ENCODE measurements at regions of chr3 and their contacts with region 1.

Region 1: GRCh38 chr3:128075516-128076482 is 23.6 kb downstream of the SEC61A1 start:
- DNase-seq: peak; percentile 73 to 93 (median 84)
- ATAC-seq: peak; percentile 95
- H3K4me3 ChIP-seq: peak overlapping the region; percentile 53
- H3K4me3 Mint-ChIP-seq: peak overlapping the region; percentile 55 to 82 (median 73)
- H3K27ac ChIP-seq: peak overlapping the region; percentile 42
- H3K27ac Mint-ChIP-seq: peak overlapping the region in 6 of 9 donors; percentile 51 to 84 (median 62)
- H3K4me1 ChIP-seq: peaks cover 0 to 9% of the 10 kb centered on the region in 2 donors
- H3K4me1 Mint-ChIP-seq: peaks cover 0 to 12% (median 7%) of the 10 kb centered on the region in 7 donors
- H3K27me3 ChIP-seq: no peaks in the 10 kb centered on the region
- H3K27me3 Mint-ChIP-seq: peaks cover 0 to 2% (median 0%) of the 10 kb centered on the region in 5 donors

Region 2: DNA sequence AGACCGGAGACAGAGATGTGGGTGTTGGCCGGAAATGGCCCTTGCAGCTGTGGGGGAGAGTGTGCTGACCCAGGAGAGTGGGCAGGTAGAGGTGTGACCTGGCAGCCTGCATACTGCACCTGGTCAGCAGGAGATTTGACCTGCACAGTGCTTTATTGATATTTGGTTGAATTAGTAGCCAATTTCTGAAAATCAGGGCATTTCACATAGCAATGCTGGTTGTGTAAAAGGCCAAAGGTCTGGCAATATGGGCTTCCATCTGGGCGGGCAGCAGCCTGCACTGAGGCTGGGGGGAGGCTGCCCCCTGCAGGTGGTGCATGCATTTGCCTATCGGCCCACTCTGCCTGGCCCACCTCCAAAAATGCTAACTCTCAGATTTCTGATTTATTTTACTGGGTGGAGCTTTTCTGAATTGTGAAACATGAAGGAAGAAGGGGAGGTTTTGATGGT is 244.1 kb before region 1 on chr3:
- CTCF ChIA-PET with region 1: no interaction called
- POLR2A ChIA-PET with region 1: no interaction called
- intact Hi-C with region 1: no loop called
- DNase-seq: no peak
- ATAC-seq: peak; percentile 68
- H3K4me3 ChIP-seq: no peak overlapping the region
- H3K4me3 Mint-ChIP-seq: no peak overlapping the region
- H3K27ac ChIP-seq: no peak overlapping the region
- H3K27ac Mint-ChIP-seq: no peak overlapping the region
- H3K4me1 ChIP-seq: no peaks in the 10 kb centered on the region
- H3K4me1 Mint-ChIP-seq: peaks cover 0 to 4% (median 0%) of the 10 kb centered on the region in 7 donors
- H3K27me3 ChIP-seq: no peaks in the 10 kb centered on the region
- H3K27me3 Mint-ChIP-seq: peaks cover 11 to 55% (median 25%) of the 10 kb centered on the region in 5 donors

Region 3: DNA sequence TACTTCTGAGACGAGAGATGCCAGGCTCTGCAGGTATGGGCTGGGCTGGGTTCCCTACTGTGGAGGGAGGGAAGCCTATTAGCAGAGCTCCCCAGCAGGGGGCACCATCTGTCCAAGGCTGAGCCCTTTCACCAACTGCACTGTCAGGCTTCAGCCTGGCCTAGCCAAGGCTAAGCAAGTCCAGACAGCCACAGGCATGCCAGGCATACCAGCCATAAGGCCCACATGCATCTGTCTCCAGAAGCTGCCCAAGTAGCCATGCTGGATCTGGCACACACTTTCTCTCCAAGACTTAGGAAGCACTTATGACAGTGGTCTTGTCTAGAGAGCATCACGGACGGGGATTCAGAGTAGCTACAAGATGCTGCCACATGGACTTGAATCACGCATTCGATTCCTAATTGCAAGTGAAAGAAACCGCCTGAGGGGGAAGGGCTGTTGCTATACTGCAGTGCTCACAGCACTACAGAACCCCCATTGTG is 19.5 kb after region 1 on chr3:
- CTCF ChIA-PET with region 1: interaction called, 3 read pairs
- POLR2A ChIA-PET with region 1: interaction called, 4 read pairs
- intact Hi-C with region 1: loop called in 1 of 2 experiments (anchors 2 kb)
- DNase-seq: peak; percentile 51 to 79 (median 73)
- ATAC-seq: peak; percentile 99
- H3K4me3 ChIP-seq: no peak overlapping the region
- H3K4me3 Mint-ChIP-seq: no peak overlapping the region
- H3K27ac ChIP-seq: no peak overlapping the region
- H3K27ac Mint-ChIP-seq: peak overlapping the region in 4 of 9 donors; percentile 16 to 68 (median 36)
- H3K4me1 ChIP-seq: no peaks in the 10 kb centered on the region
- H3K4me1 Mint-ChIP-seq: peaks cover 1 to 18% (median 6%) of the 10 kb centered on the region in 7 donors
- H3K27me3 ChIP-seq: no peaks in the 10 kb centered on the region
- H3K27me3 Mint-ChIP-seq: no peaks in the 10 kb centered on the region

Region 4: GRCh38 chr3:128123538-128124368 is 48.0 kb after region 1 on chr3 and contains the start of gene RUVBL1:
- CTCF ChIA-PET with region 1: interaction called, 3 read pairs
- POLR2A ChIA-PET with region 1: no interaction called
- intact Hi-C with region 1: loop called (anchors 1 to 2 kb)
- DNase-seq: peak; percentile 85 to 99 (median 98)
- ATAC-seq: peak; percentile 97
- H3K4me3 ChIP-seq: peak within 1 kb of the TSS; percentile 83
- H3K4me3 Mint-ChIP-seq: peak within 1 kb of the TSS; percentile 82 to 100 (median 98)
- H3K27ac ChIP-seq: peak within 1 kb of the TSS; percentile 84
- H3K27ac Mint-ChIP-seq: peak within 1 kb of the TSS; percentile 95 to 99 (median 97)
- H3K4me1 ChIP-seq: peaks cover 13 to 15% of the 10 kb centered on the region in 2 donors
- H3K4me1 Mint-ChIP-seq: peaks cover 23 to 40% (median 27%) of the 10 kb centered on the region in 7 donors
- H3K27me3 ChIP-seq: no peaks in the 10 kb centered on the region
- H3K27me3 Mint-ChIP-seq: peaks cover 0 to under 1% (median 0%) of the 10 kb centered on the region in 5 donors
- total RNA-seq, gene RUVBL1: 16.8 to 59.3 (median 22.5) TPM

Region 5: GRCh38 chr3:128133273-128134084 is 57.7 kb after region 1 on chr3:
- CTCF ChIA-PET with region 1: interaction called, 5 read pairs
- POLR2A ChIA-PET with region 1: no interaction called
- intact Hi-C with region 1: loop called in 1 of 2 experiments (anchors 1 kb)
- DNase-seq: peak in 5 of 9 donors; percentile 14 to 34 (median 23)
- ATAC-seq: peak; percentile 76
- H3K4me3 ChIP-seq: no peak overlapping the region
- H3K4me3 Mint-ChIP-seq: no peak overlapping the region
- H3K27ac ChIP-seq: no peak overlapping the region
- H3K27ac Mint-ChIP-seq: no peak overlapping the region
- H3K4me1 ChIP-seq: no peaks in the 10 kb centered on the region
- H3K4me1 Mint-ChIP-seq: no peaks in the 10 kb centered on the region
- H3K27me3 ChIP-seq: no peaks in the 10 kb centered on the region
- H3K27me3 Mint-ChIP-seq: peaks cover 0 to 34% (median 3%) of the 10 kb centered on the region in 5 donors

Region 6: DNA sequence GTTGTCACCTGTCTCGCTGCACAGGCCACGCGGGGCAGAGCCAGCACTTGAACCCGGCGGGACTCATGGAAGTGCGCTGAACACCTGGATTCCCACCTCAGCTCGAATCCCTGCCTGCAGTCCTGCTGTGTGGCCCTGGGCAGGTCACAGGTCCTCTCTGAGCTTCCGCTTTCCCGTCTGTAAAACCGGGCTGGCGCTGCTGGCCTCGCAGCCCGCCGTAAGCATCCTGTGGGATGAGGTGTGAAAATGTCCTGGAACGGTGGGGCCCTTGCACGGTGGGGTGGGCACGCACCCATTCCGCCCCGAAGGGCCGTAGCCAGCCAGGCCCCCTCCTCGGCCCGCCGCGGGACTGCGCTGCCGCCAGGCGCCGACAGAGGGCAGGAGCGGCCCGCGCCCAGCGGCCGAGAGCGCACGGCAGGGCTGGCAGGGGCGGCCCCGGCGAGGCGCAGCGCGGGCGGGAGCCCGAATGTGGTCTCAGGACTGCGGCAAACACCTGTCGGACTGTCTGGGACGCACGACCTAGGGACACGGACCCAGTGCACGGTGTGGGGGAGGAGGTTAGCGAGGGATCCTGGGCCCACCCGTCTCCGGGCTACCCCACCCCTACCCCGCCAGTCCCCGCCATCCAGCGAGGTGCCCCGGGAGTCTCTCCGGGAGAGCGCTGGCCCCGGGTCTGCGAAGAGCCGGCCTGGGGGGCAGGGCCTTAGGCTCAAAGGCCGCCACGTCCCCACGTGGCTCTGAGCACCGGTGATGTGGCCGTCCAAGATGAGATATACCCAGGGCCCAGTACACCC is 350.5 kb after region 1 on chr3:
- CTCF ChIA-PET with region 1: no interaction called
- POLR2A ChIA-PET with region 1: no interaction called
- intact Hi-C with region 1: loop called in 1 of 2 experiments (anchors 1 kb)
- DNase-seq: peak; percentile 23 to 81 (median 61)
- ATAC-seq: peak; percentile 93
- H3K4me3 ChIP-seq: no peak overlapping the region
- H3K4me3 Mint-ChIP-seq: peak overlapping the region in 1 of 10 donors; percentile 19
- H3K27ac ChIP-seq: no peak overlapping the region
- H3K27ac Mint-ChIP-seq: no peak overlapping the region
- H3K4me1 ChIP-seq: no peaks in the 10 kb centered on the region
- H3K4me1 Mint-ChIP-seq: peaks cover 0 to 4% (median 0%) of the 10 kb centered on the region in 7 donors
- H3K27me3 ChIP-seq: no peaks in the 10 kb centered on the region
- H3K27me3 Mint-ChIP-seq: peaks cover 9 to 35% (median 22%) of the 10 kb centered on the region in 5 donors

Region 7: DNA sequence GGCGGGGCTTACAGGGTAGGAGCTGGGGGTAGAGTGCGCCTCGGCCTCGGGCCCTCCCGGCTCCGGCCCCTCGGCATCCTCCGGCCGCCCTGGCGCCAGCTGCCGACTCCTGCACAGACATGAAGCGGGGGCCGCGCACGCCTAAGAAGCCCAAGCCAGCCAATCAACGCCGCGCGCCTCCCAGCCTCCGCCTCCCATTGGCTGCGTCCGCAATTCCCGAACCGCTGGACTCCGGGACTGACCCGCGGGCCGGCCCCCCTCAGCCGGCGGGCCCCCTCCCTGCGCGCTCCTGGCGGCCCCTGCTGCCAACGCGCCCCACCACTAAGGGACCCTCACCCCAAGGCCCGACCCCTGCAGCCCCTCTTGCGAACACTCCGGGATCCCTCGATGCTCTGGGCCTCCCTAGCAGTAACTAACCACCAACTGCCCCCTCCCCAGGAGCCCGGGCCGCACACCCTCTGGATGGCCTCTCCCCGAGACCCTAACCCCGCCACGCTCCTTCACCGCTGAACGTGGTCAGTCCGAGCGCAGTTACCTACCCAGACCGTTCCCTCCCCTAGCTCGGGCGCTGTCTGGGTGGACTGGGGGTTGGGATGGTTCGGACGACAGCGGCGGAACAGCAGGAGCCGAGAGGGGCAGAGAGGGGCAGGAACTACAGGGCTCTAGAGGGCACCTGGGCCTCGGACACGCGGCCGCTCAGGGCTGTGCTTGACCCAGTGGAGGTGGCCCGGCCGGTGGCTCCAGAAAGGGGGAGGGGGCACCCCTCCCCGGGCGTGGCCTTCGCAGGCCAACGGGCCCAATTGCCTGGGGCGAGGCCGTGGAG is 412.2 kb after region 1 on chr3:
- CTCF ChIA-PET with region 1: no interaction called
- POLR2A ChIA-PET with region 1: no interaction called
- intact Hi-C with region 1: loop called in 1 of 2 experiments (anchors 5 kb)
- DNase-seq: peak in 2 of 9 donors; percentile 28 to 36
- ATAC-seq: peak; percentile 30
- H3K4me3 ChIP-seq: peak overlapping the region; percentile 59
- H3K4me3 Mint-ChIP-seq: peak overlapping the region in 9 of 10 donors; percentile 25 to 97 (median 89)
- H3K27ac ChIP-seq: no peak overlapping the region
- H3K27ac Mint-ChIP-seq: no peak overlapping the region
- H3K4me1 ChIP-seq: peaks cover 11 to 61% of the 10 kb centered on the region in 2 donors
- H3K4me1 Mint-ChIP-seq: peaks cover 21 to 52% (median 31%) of the 10 kb centered on the region in 7 donors
- H3K27me3 ChIP-seq: peaks cover 14 to 52% of the 10 kb centered on the region in 2 donors
- H3K27me3 Mint-ChIP-seq: peaks cover 58 to 80% (median 62%) of the 10 kb centered on the region in 5 donors

Region 8: GRCh38 chr3:128497387-128498126 is 421.8 kb after region 1 on chr3:
- CTCF ChIA-PET with region 1: no interaction called
- POLR2A ChIA-PET with region 1: no interaction called
- intact Hi-C with region 1: loop called (anchors 1 to 5 kb)
- DNase-seq: peak; percentile 55 to 86 (median 72)
- ATAC-seq: peak; percentile 75
- H3K4me3 ChIP-seq: peak overlapping the region; percentile 5
- H3K4me3 Mint-ChIP-seq: peak overlapping the region; percentile 69 to 85 (median 77)
- H3K27ac ChIP-seq: no peak overlapping the region
- H3K27ac Mint-ChIP-seq: peak overlapping the region in 2 of 9 donors; percentile 41 to 62
- H3K4me1 ChIP-seq: peaks cover 0 to 4% of the 10 kb centered on the region in 2 donors
- H3K4me1 Mint-ChIP-seq: peaks cover 4 to 14% (median 9%) of the 10 kb centered on the region in 7 donors
- H3K27me3 ChIP-seq: peaks cover 0 to 5% of the 10 kb centered on the region in 2 donors
- H3K27me3 Mint-ChIP-seq: peaks cover 54 to 69% (median 59%) of the 10 kb centered on the region in 5 donors